GM10248 (cell line): ENCODE measurements at regions of chr13 and their contacts with region 1.

Region 1: DNA sequence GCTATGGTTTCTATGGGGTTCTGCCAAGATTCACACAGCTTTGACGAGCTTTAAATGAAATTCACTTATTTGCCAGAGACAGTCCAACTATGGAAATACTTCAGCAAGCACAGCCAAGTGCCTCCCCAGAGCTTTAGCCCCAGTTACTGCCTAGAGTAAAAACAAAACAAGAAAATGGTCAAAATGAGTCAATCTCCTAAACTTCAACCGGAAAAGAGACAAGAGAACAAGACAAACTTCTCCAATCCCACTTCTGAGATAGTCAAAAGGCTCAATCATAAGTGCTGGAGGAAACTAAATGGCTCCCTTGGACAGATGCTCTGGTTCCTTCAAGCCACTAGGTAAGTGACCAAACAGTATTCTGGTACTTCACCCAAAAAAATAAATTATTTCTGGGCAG is 65.8 kb downstream of the KATNAL1 start:
- DNase-seq: no peak
- CTCF ChIP-seq: no peak

Region 2: DNA sequence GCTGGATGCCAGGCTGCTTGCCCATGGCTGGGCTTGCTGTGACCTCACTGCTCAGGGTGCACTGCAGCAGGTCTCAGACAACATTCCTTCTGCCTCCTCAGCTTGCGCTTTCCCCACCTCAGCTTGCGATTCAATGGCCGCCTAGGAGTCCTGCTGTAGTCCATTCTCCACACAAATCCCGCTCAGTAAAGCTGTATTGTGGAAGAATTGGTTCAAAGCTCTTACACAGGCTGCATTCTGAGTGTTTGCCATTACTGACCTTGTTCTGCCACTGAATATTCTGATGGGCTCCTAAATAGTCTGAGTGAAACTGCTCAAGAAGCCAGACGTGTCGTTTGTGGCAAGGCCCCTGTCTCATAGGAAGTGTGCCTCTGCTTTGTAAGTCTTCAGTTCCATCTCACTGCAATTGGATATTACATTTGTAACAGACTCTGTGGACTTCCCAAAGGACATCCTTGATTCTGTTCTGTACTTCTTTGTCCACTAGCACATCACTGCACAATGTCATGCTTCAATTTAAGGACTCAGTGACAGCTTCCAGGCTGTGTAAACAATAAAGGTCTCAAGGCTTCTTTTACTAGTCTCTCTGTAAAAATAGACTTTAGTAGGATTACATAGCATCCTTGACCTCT is 16.1 kb after region 1 on chr13:
- CTCF ChIA-PET with region 1: interaction called, 17 read pairs
- POLR2A ChIA-PET with region 1: no interaction called
- DNase-seq: peak; percentile 28
- CTCF ChIP-seq: no peak

Region 3: GRCh38 chr13:30268673-30269072 is 27.1 kb after region 1 on chr13:
- CTCF ChIA-PET with region 1: no interaction called
- POLR2A ChIA-PET with region 1: no interaction called
- DNase-seq: no peak
- CTCF ChIP-seq: no peak